Calu3 (cell line): ENCODE measurements at regions of chr15 and their contacts with region 1.

Region 1: DNA sequence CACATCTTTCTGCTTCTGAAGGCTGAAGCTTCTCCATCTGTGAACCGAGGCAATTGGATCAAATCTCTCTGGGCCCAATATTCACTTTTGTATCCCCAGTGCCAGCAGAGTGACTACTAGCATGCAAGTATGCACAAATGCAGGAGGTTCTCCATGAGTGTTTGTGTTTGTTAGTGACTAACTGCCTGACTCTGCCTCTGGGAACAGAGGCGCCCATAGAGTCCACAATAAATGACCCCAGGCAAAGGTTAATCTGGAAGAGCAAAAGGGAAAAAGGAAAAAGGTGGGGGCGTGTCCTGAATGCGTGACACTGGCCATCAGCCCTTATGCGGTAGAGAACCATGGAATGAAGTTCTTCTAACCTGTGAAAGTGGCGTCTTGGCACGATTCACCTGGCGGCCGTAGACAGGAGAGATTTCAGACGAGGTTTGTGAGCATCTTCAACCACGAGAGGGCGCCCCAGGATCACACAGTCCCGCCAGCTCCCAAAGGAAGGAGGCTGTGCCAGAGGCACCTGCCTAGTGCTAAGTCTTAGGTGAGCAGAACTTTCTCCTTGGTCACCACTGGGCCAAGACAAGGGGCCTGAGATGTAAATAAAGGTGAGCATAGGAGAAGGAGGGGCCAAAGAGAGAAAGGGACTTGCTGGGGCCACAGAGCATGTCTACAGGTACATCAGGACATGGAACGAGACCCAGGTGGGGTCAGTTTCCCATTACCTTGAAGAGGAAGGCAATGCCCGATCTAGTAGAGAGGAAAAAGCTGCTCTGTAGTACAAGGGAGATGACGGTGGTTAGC is 44.2 kb downstream of the RBPMS2 start:
- DNase-seq: peak; percentile 95
- H3K4me3 Mint-ChIP-seq: no peak overlapping the region
- H3K27ac Mint-ChIP-seq: no peak overlapping the region
- H3K4me1 Mint-ChIP-seq: peaks cover 8% of the 10 kb centered on the region
- H3K27me3 Mint-ChIP-seq: peaks cover 10% of the 10 kb centered on the region
- CTCF ChIP-seq: peak; percentile 91

Region 2: GRCh38 chr15:64430000-64430735 is 301.0 kb before region 1 on chr15:
- CTCF ChIA-PET with region 1: no interaction called
- intact Hi-C with region 1: loop called (anchors 5 kb)
- DNase-seq: no peak
- H3K4me3 Mint-ChIP-seq: no peak overlapping the region
- H3K27ac Mint-ChIP-seq: no peak overlapping the region
- H3K4me1 Mint-ChIP-seq: no peaks in the 10 kb centered on the region
- H3K27me3 Mint-ChIP-seq: no peaks in the 10 kb centered on the region
- CTCF ChIP-seq: no peak

Region 3: DNA sequence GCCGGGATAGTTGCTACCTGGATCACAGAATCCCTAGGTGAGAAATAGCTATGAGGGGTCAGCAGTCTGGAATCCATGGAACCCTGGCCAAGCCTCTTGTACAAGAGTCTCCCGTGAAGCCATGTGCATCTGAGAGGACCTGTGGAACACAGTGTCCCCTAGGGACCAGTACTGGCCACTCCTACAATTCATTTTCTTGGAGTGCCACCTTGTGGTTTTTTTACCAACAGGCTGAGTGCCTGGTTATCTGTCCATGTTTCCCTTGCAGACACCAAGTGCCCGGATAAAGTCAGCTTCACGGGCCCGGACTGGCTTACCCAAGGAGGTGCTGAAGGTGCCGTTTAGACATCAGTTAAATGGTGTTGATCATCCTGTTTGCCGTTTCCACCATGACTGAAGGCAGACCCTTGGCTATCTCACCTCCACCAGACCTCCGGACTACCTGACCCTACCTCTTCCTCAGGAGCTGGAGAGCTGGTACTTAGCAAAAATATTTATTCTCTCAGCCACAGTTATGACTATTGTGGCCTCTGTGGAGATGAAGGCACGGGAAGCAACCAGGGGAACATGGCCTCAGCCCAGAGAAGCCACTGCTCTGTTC is 49.7 kb before region 1 on chr15:
- CTCF ChIA-PET with region 1: interaction called, 23 read pairs
- intact Hi-C with region 1: loop called (anchors 1 kb)
- DNase-seq: peak; percentile 71
- H3K4me3 Mint-ChIP-seq: no peak overlapping the region
- H3K27ac Mint-ChIP-seq: no peak overlapping the region
- H3K4me1 Mint-ChIP-seq: no peaks in the 10 kb centered on the region
- H3K27me3 Mint-ChIP-seq: no peaks in the 10 kb centered on the region
- CTCF ChIP-seq: peak; percentile 80

Region 4: DNA sequence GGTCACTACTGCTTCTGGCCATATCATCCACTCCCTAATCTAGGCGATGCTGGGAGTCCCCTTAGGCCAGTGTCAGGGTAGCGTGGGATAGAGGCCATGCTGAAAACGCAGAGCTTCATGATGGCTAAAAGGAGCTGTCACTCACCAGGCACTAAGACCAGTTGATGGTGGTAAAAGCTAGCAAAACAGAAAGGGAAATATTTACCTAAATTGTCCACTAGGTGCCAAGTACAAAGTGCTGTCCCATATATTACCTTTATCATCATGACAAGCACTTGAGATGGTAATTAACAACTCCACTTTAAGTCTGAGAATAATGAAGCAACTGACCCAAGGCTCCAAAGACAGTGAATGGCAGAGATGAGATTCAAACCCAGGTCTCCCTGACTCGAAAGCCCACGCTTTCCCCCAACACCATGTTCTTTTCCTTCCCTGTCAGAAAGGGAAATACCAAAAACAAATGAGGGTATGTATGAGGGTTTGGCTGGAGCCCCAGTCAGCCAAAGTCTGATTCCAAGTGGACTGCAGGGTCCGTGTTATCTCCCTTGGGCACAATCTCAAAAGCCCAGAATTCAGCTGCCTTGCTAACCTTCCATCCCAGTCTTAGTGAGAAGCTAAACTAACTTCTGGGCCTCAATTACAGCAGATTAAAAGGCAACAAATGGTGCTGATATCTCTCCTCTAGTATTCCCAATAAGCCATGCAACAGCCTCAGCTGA is 40.5 kb before region 1 on chr15:
- CTCF ChIA-PET with region 1: interaction called, 23 read pairs
- intact Hi-C with region 1: loop called (anchors 1 kb)
- DNase-seq: no peak
- H3K4me3 Mint-ChIP-seq: no peak overlapping the region
- H3K27ac Mint-ChIP-seq: no peak overlapping the region
- H3K4me1 Mint-ChIP-seq: no peaks in the 10 kb centered on the region
- H3K27me3 Mint-ChIP-seq: no peaks in the 10 kb centered on the region
- CTCF ChIP-seq: no peak

Region 5: DNA sequence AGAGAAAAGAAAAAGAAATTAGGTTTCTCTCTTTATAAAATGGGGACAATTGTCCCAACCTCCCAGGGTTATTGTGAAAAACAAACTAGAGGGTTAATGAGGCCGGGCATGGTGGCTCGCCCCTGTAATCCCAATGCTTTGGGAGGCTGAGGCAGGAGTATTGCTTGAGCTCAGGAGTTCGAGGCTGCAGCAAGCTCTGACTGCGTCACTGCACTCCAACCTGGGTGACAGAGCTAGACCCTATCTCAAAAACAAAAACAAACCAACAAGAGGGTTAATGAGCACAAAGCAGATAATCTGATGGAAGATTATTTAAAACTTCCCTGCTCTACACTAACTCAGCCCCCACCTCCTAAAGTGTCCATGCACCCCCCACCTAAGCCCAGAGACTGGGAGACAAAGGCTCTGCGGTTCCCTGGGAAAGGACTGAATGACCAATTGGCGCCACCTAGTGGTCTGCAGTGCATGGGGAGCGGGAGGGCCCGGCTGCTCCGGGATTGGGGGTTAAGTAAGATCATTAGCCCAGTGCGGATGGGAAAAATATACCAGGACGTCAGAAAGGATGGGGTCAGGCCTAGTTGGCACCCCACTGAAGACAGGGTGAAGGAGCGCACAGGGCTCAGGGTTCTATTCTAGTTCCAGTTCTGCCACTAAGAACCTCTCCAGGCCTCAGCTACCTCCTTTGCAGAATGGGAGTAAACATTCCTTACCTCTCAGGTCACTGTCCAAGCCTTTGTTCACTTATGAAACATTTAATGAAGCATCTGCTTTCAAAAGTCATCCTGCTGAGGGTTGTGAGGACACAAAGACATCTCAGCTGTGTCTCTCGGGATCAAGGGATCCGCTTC is 78.7 kb after region 1 on chr15:
- CTCF ChIA-PET with region 1: interaction called, 30 read pairs
- intact Hi-C with region 1: loop called (anchors 1 kb)
- DNase-seq: peak; percentile 88
- H3K4me3 Mint-ChIP-seq: no peak overlapping the region
- H3K27ac Mint-ChIP-seq: no peak overlapping the region
- H3K4me1 Mint-ChIP-seq: no peaks in the 10 kb centered on the region
- H3K27me3 Mint-ChIP-seq: peaks cover 28% of the 10 kb centered on the region
- CTCF ChIP-seq: peak; percentile 90

Region 6: GRCh38 chr15:64825431-64826294 is 94.5 kb after region 1 on chr15 and contains the start of gene PIF1:
- CTCF ChIA-PET with region 1: no interaction called
- intact Hi-C with region 1: no loop called
- DNase-seq: peak; percentile 92
- H3K4me3 Mint-ChIP-seq: peak within 1 kb of the TSS; percentile 86
- H3K27ac Mint-ChIP-seq: peak within 1 kb of the TSS; percentile 75
- H3K4me1 Mint-ChIP-seq: peaks cover 19% of the 10 kb centered on the region
- H3K27me3 Mint-ChIP-seq: no peaks in the 10 kb centered on the region
- CTCF ChIP-seq: no peak
- total RNA-seq, gene PIF1: 33.9 and 51.5 TPM in 2 replicates

Region 7: GRCh38 chr15:64905119-64905831 is 174.1 kb after region 1 on chr15:
- CTCF ChIA-PET with region 1: interaction called, 7 read pairs
- intact Hi-C with region 1: loop called (anchors 1 kb)
- DNase-seq: peak; percentile 80
- H3K4me3 Mint-ChIP-seq: no peak overlapping the region
- H3K27ac Mint-ChIP-seq: no peak overlapping the region
- H3K4me1 Mint-ChIP-seq: peaks cover 7% of the 10 kb centered on the region
- H3K27me3 Mint-ChIP-seq: peaks cover 25% of the 10 kb centered on the region
- CTCF ChIP-seq: peak; percentile 82